ENCODE measurements at regions of chr10 and their contacts with region 1.

Region 1: GRCh38 chr10:91944880-91945630 is 21.5 kb downstream of the BTAF1 start:
- H3K4me3 Mint-ChIP-seq: no peak overlapping the region
- H3K27ac Mint-ChIP-seq: no peak overlapping the region
- H3K4me1 Mint-ChIP-seq: no peaks in the 10 kb centered on the region
- H3K27me3 Mint-ChIP-seq: no peaks in the 10 kb centered on the region

Region 2: DNA sequence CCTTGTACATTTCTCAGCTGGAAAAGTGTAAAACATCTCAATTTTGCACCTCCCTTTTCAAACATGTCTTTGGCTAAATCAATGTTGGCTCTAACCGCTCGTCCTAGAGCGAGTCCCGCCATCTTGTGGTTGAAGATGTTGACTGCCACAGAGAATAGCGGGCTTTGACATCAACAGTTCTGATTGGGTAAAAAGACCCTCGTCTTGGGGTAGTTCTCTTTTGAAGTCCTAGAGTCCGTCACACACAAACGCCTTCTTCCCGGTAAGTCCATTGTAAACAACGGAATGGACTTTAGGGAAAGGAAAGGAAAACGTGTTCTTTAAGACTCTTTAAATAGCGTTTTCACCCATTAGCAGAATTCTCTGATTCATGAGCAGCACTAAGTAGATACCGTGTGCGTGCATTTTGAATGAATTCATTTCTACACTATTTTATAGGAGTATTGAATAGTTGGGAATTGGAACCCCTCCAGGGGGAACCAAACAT is 1073.7 kb before region 1 on chr10:
- intact Hi-C with region 1: no loop called
- H3K4me3 Mint-ChIP-seq: peak overlapping the region; percentile 98
- H3K27ac Mint-ChIP-seq: peak overlapping the region; percentile 86
- H3K4me1 Mint-ChIP-seq: peaks cover 27% of the 10 kb centered on the region
- H3K27me3 Mint-ChIP-seq: peaks cover 16% of the 10 kb centered on the region

Region 3: DNA sequence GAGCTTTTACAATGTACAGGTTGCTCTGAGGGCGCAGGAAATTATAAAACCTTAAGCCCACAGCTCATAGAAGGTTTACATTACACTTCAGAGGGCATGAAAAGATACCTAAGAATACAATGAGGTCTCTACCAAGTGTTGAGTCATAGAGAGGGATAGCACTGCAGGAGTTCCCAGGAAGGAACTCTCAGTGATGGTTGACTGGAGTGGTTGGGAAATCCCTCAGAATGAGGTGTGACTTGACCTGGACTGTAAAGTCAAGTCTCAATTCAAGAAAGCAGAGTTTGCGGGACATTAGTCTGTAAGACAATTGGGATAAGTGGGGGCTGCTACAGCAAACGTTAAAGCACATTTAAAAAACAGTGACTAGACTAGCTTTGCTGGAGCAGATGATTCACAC is 124.9 kb before region 1 on chr10:
- intact Hi-C with region 1: loop called (anchors 5 kb)
- H3K4me3 Mint-ChIP-seq: no peak overlapping the region
- H3K27ac Mint-ChIP-seq: no peak overlapping the region
- H3K4me1 Mint-ChIP-seq: no peaks in the 10 kb centered on the region
- H3K27me3 Mint-ChIP-seq: no peaks in the 10 kb centered on the region

Measured in dendritic cell treated with granulocyte-macrophage colony-stimulating factor and Interleukin-4, amounts not matched to agents 40 ng/mL and 50 ng/mL, for 4 days (primary cell).